ENCODE measurements at regions of chr20 and their contacts with region 1.

Region 1: GRCh38 chr20:50085452-50086365 is 27.2 kb downstream of the UBE2V1 start:
- DNase-seq: peak; percentile 49
- ATAC-seq: peak; percentile 86
- H3K4me3 Mint-ChIP-seq: peak overlapping the region; percentile 9
- H3K27ac Mint-ChIP-seq: peak overlapping the region; percentile 52
- H3K4me1 Mint-ChIP-seq: peaks cover 29% of the 10 kb centered on the region
- H3K27me3 Mint-ChIP-seq: no peaks in the 10 kb centered on the region
- CTCF ChIP-seq: peak; percentile 77

Region 2: GRCh38 chr20:50020288-50020687 is 65.4 kb before region 1 on chr20:
- CTCF ChIA-PET with region 1: no interaction called
- POLR2A ChIA-PET with region 1: no interaction called
- intact Hi-C with region 1: no loop called
- DNase-seq: peak; percentile 37
- ATAC-seq: peak; percentile 80
- H3K4me3 Mint-ChIP-seq: no peak overlapping the region
- H3K27ac Mint-ChIP-seq: no peak overlapping the region
- H3K4me1 Mint-ChIP-seq: no peaks in the 10 kb centered on the region
- H3K27me3 Mint-ChIP-seq: peaks cover 4% of the 10 kb centered on the region
- CTCF ChIP-seq: no peak

Region 3: GRCh38 chr20:50034567-50035208 is 51.0 kb before region 1 on chr20:
- CTCF ChIA-PET with region 1: no interaction called
- POLR2A ChIA-PET with region 1: no interaction called
- intact Hi-C with region 1: no loop called
- DNase-seq: no peak
- ATAC-seq: no peak
- H3K4me3 Mint-ChIP-seq: no peak overlapping the region
- H3K27ac Mint-ChIP-seq: no peak overlapping the region
- H3K4me1 Mint-ChIP-seq: no peaks in the 10 kb centered on the region
- H3K27me3 Mint-ChIP-seq: no peaks in the 10 kb centered on the region
- CTCF ChIP-seq: no peak

Region 4: DNA sequence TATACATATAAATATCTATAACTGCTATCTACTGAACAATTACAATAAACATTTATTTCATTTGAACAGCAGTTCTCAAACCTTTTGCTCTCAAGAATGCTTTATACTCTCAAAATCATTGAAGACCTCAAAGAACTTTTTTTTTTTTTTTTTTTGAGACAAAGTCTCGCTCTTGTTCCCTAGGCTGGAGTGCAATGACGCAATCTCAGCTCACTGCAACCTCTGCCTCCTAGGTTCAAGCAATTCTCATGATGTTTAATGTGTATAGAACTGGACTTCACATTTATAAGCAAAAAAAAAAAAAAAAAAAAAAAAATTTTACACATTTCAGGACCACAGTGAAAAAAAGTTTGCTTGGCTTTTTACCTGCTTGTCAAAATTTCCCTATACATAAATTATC is 15.6 kb after region 1 on chr20:
- CTCF ChIA-PET with region 1: interaction called, 57 read pairs
- POLR2A ChIA-PET with region 1: interaction called, 5 read pairs
- intact Hi-C with region 1: no loop called
- DNase-seq: no peak
- ATAC-seq: no peak
- H3K4me3 Mint-ChIP-seq: no peak overlapping the region
- H3K27ac Mint-ChIP-seq: no peak overlapping the region
- H3K4me1 Mint-ChIP-seq: peaks cover 50% of the 10 kb centered on the region
- H3K27me3 Mint-ChIP-seq: no peaks in the 10 kb centered on the region
- CTCF ChIP-seq: no peak

Region 5: DNA sequence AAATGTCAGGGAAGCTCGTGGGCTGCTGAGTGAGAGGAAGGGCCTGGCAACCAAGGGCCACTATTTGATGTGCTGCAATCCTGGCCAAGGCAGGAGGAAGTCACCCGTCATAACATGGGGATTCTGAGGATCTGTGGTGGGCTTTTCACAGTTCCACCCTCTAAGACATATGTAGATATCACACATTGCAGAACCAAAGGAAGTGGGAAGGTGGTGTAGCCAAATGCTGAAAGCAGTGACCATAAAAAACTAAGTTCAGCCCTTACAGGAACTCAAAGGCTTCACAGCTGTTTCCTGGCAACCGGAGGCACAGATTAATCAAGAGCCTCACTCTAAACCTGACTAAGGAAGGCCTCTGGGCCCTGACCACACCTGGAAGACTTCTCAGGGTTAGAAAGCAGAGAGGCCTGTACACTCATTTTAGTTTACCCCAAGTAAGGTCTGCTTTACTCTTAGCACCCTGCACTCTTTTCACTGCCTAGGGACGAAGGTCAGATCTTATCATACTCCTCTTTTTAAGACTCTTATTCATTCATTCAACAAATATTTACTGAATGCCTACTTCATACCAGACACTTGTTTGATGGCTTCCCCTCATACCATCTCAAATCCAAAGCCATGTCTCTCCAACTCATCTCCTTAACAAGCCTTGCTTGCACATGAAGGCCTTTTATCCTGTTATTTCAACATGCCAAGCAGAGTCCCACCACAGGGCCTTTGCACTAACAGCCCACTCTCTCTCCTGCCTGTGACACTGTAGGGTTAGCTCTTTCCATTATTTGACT is 24.6 kb after region 1 on chr20:
- CTCF ChIA-PET with region 1: interaction called, 11 read pairs
- POLR2A ChIA-PET with region 1: interaction called, 5 read pairs
- intact Hi-C with region 1: no loop called
- DNase-seq: peak; percentile 84
- ATAC-seq: peak; percentile 50
- H3K4me3 Mint-ChIP-seq: peak overlapping the region; percentile 94
- H3K27ac Mint-ChIP-seq: peak overlapping the region; percentile 95
- H3K4me1 Mint-ChIP-seq: peaks cover 80% of the 10 kb centered on the region
- H3K27me3 Mint-ChIP-seq: no peaks in the 10 kb centered on the region
- CTCF ChIP-seq: no peak